OCI-LY7 (cell line): ENCODE measurements at regions of chr9 and their contacts with region 1.

Region 1: DNA sequence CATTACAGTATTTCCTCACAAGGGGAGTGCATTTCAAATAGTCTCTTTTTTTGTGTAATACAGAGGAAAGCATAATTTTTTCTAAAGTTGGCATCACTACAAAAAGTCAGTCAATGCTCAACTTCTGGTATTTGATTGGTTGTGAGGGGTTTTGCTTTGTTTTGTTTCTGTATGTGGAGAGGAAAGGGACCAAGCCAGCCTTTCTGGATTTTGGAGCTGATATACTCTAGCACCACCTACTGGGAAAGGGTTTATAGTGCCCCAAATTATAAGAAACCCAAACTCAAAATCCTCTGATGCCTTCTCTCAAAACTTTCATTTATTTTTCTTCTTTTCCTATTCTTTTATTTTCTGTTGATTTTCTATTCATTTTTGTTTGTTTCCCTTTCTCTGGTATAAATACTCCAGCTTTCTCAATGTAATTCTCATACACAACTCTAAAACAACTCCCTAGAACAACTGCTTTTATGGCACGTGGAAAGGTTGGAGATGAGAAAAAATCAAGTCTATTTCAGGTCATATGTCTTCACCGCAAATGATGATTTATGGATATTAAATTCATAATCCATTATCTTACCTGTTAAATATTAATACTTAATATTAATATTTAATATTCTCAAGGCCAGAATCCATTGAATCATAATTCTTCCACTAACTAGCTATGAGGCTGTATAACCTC is 69.5 kb upstream of the ANXA1 start:
- DNase-seq: peak; percentile 30
- H3K4me3 ChIP-seq: no peak overlapping the region
- H3K27ac ChIP-seq: no peak overlapping the region
- H3K4me1 ChIP-seq: no peaks in the 10 kb centered on the region
- CTCF ChIP-seq: peak; percentile 87

Region 2: DNA sequence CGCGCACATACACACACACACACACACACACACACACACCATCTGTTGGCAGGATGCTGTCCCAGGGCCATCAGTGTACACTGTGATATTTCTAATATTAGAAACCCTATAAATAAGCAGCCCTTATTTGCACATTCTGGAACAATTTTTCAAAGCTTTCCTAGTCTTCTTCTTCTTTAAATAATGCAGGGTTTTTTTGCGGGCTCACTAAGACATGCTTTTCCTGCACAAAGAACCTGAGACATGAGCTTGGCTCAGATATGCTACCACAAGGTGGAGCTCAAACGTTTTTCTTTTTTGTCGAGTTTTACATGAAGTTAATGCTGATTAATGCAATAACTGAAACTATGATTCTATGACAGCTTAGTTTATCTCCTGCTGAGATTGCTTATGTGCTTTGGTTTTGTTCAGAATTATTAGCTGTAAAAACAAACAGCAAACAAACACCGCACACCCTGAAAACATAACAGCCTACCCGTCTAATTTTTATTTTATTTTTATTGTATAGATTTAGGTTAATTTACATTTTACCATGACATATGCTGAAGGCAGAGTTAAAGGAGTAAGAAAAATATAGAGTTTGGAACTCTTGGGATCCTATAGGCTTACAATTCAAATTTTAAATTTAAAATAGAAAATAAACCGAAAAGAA is 225.0 kb before region 1 on chr9:
- CTCF ChIA-PET with region 1: no interaction called
- POLR2A ChIA-PET with region 1: no interaction called
- intact Hi-C with region 1: loop called (anchors 5 kb)
- DNase-seq: peak; percentile 31
- H3K4me3 ChIP-seq: no peak overlapping the region
- H3K27ac ChIP-seq: no peak overlapping the region
- H3K4me1 ChIP-seq: no peaks in the 10 kb centered on the region
- CTCF ChIP-seq: peak; percentile 79

Region 3: GRCh38 chr9:73426269-73426668 is 344.2 kb after region 1 on chr9:
- CTCF ChIA-PET with region 1: no interaction called
- POLR2A ChIA-PET with region 1: no interaction called
- intact Hi-C with region 1: no loop called
- DNase-seq: no peak
- H3K4me3 ChIP-seq: no peak overlapping the region
- H3K27ac ChIP-seq: no peak overlapping the region
- H3K4me1 ChIP-seq: no peaks in the 10 kb centered on the region
- CTCF ChIP-seq: no peak